A673 (cell line): ENCODE measurements at regions of chr6 and their contacts with region 1.

Region 1: GRCh38 chr6:47733879-47734558 is 35.6 kb downstream of the ADGRF4 start:
- DNase-seq: peak; percentile 35
- H3K4me3 ChIP-seq: no peak overlapping the region
- H3K27ac ChIP-seq: no peak overlapping the region
- H3K4me1 ChIP-seq: no peaks in the 10 kb centered on the region
- H3K27me3 ChIP-seq: no peaks in the 10 kb centered on the region
- CTCF ChIP-seq: peak; percentile 61

Region 2: GRCh38 chr6:47631269-47631772 is 102.7 kb before region 1 on chr6:
- CTCF ChIA-PET with region 1: interaction called, 7 read pairs
- POLR2A ChIA-PET with region 1: no interaction called
- intact Hi-C with region 1: loop called (anchors 2 kb)
- DNase-seq: peak; percentile 77
- H3K4me3 ChIP-seq: no peak overlapping the region
- H3K27ac ChIP-seq: no peak overlapping the region
- H3K4me1 ChIP-seq: peaks cover 14% of the 10 kb centered on the region
- H3K27me3 ChIP-seq: no peaks in the 10 kb centered on the region
- CTCF ChIP-seq: peak; percentile 66